Caco-2 (cell line): ENCODE measurements at regions of chr3 and their contacts with region 1.

Region 1: GRCh38 chr3:29924783-29925561 is 644.1 kb downstream of the RBMS3 start:
- DNase-seq: no peak
- H3K4me3 ChIP-seq: no peak overlapping the region
- H3K4me3 Mint-ChIP-seq: no peak overlapping the region
- H3K27ac Mint-ChIP-seq: no peak overlapping the region
- H3K4me1 ChIP-seq: no peaks in the 10 kb centered on the region
- H3K4me1 Mint-ChIP-seq: no peaks in the 10 kb centered on the region
- H3K27me3 ChIP-seq: no peaks in the 10 kb centered on the region
- H3K27me3 Mint-ChIP-seq: no peaks in the 10 kb centered on the region
- CTCF ChIP-seq: no peak

Region 2: DNA sequence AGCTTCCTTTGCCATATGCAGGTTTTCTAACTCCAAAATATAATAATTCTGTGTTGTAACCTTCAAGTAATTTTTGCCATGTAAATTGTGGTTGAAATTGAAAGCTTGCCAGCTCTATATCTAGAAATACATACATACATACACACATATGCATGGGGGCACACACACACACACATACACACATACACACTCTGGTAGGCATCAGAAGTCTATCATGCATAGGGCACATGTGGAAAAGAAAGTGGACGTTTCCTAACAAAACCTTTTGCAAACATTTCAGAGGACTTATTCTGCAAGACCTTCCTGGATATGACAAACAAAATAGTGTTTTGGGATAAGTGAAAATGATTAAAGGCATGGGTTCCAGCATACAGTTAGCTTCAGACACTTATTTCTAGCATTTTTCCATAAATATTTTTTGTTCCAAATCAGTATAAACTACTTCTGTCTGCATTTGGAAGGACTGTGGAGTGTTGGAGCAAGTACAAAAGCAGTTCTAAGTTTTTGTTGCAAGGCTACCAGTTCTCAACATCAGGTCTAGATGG is 65.2 kb before region 1 on chr3:
- CTCF ChIA-PET with region 1: no interaction called
- POLR2A ChIA-PET with region 1: no interaction called
- intact Hi-C with region 1: no loop called
- DNase-seq: no peak
- H3K4me3 ChIP-seq: no peak overlapping the region
- H3K4me3 Mint-ChIP-seq: no peak overlapping the region
- H3K27ac Mint-ChIP-seq: no peak overlapping the region
- H3K4me1 ChIP-seq: 0 out of 2 replicates have a peak, but pooled peaks cover 3% of the 10 kb centered on the region
- H3K4me1 Mint-ChIP-seq: no peaks in the 10 kb centered on the region
- H3K27me3 ChIP-seq: no peaks in the 10 kb centered on the region; the same call in 1 of the 2 replicates
- H3K27me3 Mint-ChIP-seq: peaks cover 3% of the 10 kb centered on the region
- CTCF ChIP-seq: no peak

Region 3: DNA sequence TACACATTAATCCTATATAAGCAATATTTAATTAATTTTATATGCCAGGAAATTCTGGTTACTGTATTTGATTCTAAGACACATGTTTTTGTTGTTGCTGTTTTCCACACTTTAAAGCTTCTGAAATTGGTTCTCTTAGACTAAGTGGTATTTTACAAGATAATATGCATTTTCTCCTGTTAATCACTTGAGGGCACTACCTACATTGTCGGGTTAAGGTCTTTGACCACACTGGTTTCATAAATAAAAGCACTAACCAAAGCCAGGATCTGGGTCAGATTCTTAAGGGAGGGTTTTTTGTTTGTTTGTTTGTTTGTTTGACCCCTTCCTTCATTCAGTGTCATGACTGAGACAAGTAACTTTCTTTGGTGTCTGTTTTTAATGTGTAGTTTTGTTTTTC is 53.9 kb before region 1 on chr3:
- CTCF ChIA-PET with region 1: no interaction called
- POLR2A ChIA-PET with region 1: interaction called, 10 read pairs
- intact Hi-C with region 1: no loop called
- DNase-seq: no peak
- H3K4me3 ChIP-seq: no peak overlapping the region
- H3K4me3 Mint-ChIP-seq: no peak overlapping the region
- H3K27ac Mint-ChIP-seq: no peak overlapping the region
- H3K4me1 ChIP-seq: no peaks in the 10 kb centered on the region
- H3K4me1 Mint-ChIP-seq: no peaks in the 10 kb centered on the region
- H3K27me3 ChIP-seq: no peaks in the 10 kb centered on the region
- H3K27me3 Mint-ChIP-seq: no peaks in the 10 kb centered on the region
- CTCF ChIP-seq: no peak